ENCODE measurements at regions of chr12 and their contacts with region 1.

Region 1: DNA sequence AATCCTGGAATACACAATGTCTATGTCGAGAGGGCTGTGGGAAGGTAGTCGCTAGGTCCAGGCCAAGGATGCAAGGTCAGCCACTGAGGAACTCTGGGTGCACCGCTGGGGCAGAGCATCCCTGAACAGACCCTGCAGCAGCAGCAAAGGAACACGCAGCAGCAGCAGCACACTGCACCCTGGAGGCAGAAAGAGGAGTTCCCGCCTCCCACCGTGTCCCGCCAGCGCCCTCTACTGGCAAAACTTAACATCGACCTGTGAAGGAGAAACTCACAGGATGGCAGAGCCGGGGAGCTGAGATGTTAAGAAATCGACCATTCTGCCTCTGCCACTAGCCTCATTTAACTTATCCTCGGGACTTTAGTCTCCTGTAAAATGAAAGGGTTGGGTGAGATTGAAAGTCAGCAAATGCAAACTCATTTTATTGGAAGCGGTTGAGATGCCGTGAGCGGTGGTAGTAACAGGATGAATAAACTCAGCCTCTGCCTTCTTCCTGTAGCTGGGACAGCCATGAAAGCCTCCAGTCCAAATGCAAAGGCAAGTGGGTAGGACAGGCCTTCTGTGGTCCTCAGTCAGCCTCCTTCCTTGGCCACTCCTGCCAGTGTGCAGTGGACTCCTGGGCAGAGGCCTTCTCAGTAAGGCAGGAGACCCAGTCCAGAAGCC is 45.6 kb downstream of the STAB2 start:
- DNase-seq: peak; percentile 64
- H3K4me3 ChIP-seq: no peak overlapping the region
- H3K27ac ChIP-seq: no peak overlapping the region
- H3K4me1 ChIP-seq: peaks cover 3% of the 10 kb centered on the region
- H3K27me3 ChIP-seq: no peaks in the 10 kb centered on the region
- CTCF ChIP-seq: peak; percentile 98 to 100
- POLR2A ChIP-seq: no peak

Region 2: DNA sequence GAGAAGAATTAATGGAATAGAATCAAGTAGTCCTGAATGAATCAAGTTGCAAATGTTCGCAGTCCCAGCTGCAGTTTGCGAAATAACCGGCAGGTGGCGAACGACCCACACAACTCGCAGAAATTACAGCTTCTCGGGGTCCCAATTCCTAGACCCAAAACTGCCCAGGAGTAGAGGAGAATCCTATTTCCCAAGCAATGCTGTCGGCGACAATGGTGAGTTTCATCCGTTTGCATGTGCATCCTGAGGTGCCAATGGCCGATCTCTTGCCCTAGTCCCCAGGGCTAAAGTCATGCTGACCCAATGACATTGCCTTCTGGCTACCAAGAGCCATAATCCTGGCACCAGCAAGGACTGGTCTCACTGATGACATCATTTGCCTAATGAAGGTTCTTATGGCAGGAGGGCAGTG is 683.7 kb before region 1 on chr12:
- CTCF ChIA-PET with region 1: interaction called, 18 read pairs
- POLR2A ChIA-PET with region 1: no interaction called
- dilution Hi-C with region 1: no loop called
- intact Hi-C with region 1: loop called (anchors 2 kb)
- DNase-seq: peak; percentile 49
- H3K4me3 ChIP-seq: no peak overlapping the region
- H3K27ac ChIP-seq: no peak overlapping the region
- H3K4me1 ChIP-seq: no peaks in the 10 kb centered on the region
- H3K27me3 ChIP-seq: peaks cover 15 to 19% of the 10 kb centered on the region in 2 experiments
- CTCF ChIP-seq: peak; percentile 70 to 80
- POLR2A ChIP-seq: no peak

Region 3: GRCh38 chr12:103571286-103571685 is 61.4 kb before region 1 on chr12:
- CTCF ChIA-PET with region 1: interaction called, 107 read pairs
- POLR2A ChIA-PET with region 1: no interaction called
- dilution Hi-C with region 1: no loop called
- intact Hi-C with region 1: loop called (anchors 1 kb)
- DNase-seq: peak; percentile 13
- H3K4me3 ChIP-seq: no peak overlapping the region
- H3K27ac ChIP-seq: no peak overlapping the region
- H3K4me1 ChIP-seq: no peaks in the 10 kb centered on the region
- H3K27me3 ChIP-seq: peaks cover 7 to 13% of the 10 kb centered on the region in 2 experiments
- CTCF ChIP-seq: no peak
- POLR2A ChIP-seq: no peak

Region 4: GRCh38 chr12:103578926-103579325 is 53.8 kb before region 1 on chr12:
- CTCF ChIA-PET with region 1: interaction called, 107 read pairs
- POLR2A ChIA-PET with region 1: no interaction called
- dilution Hi-C with region 1: no loop called
- intact Hi-C with region 1: loop called (anchors 1 kb)
- DNase-seq: no peak
- H3K4me3 ChIP-seq: no peak overlapping the region
- H3K27ac ChIP-seq: no peak overlapping the region
- H3K4me1 ChIP-seq: no peaks in the 10 kb centered on the region
- H3K27me3 ChIP-seq: no peaks in the 10 kb centered on the region
- CTCF ChIP-seq: no peak
- POLR2A ChIP-seq: no peak

Region 5: GRCh38 chr12:103586132-103586531 is 46.6 kb before region 1 on chr12:
- CTCF ChIA-PET with region 1: interaction called, 18 read pairs
- POLR2A ChIA-PET with region 1: no interaction called
- dilution Hi-C with region 1: no loop called
- intact Hi-C with region 1: loop called (anchors 2 kb)
- DNase-seq: no peak
- H3K4me3 ChIP-seq: no peak overlapping the region
- H3K27ac ChIP-seq: no peak overlapping the region
- H3K4me1 ChIP-seq: no peaks in the 10 kb centered on the region
- H3K27me3 ChIP-seq: no peaks in the 10 kb centered on the region
- CTCF ChIP-seq: no peak
- POLR2A ChIP-seq: no peak

Region 6: DNA sequence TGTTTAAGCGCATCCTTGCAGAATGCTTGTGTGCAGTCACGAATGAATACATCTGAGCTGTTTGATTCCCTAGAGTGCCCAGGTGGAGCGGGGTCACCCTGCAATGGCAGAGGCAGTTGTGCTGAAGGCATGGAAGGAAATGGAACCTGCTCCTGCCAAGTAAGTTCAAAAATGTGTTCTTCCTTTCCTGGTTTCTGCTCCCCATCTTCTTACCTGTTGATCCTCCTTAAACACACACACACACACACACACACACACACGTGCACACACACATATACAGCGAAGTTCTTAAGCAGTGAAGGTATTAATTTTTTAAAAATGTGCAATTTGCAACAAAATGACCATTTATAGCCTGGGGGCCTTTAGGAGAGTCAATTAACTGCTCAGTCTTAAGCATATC is 12.3 kb before region 1 on chr12:
- CTCF ChIA-PET with region 1: interaction called, 14 read pairs
- POLR2A ChIA-PET with region 1: no interaction called
- dilution Hi-C with region 1: no loop called
- intact Hi-C with region 1: no loop called
- DNase-seq: no peak
- H3K4me3 ChIP-seq: no peak overlapping the region
- H3K27ac ChIP-seq: no peak overlapping the region
- H3K4me1 ChIP-seq: no peaks in the 10 kb centered on the region
- H3K27me3 ChIP-seq: no peaks in the 10 kb centered on the region
- CTCF ChIP-seq: no peak
- POLR2A ChIP-seq: no peak

Region 7: GRCh38 chr12:103664626-103665025 is 31.9 kb after region 1 on chr12:
- CTCF ChIA-PET with region 1: interaction called, 12 read pairs
- POLR2A ChIA-PET with region 1: no interaction called
- dilution Hi-C with region 1: no loop called
- intact Hi-C with region 1: no loop called
- DNase-seq: no peak
- H3K4me3 ChIP-seq: no peak overlapping the region
- H3K27ac ChIP-seq: no peak overlapping the region
- H3K4me1 ChIP-seq: no peaks in the 10 kb centered on the region
- H3K27me3 ChIP-seq: no peaks in the 10 kb centered on the region
- CTCF ChIP-seq: no peak
- POLR2A ChIP-seq: no peak

Region 8: GRCh38 chr12:103785236-103786031 is 152.7 kb after region 1 on chr12:
- CTCF ChIA-PET with region 1: no interaction called
- POLR2A ChIA-PET with region 1: no interaction called
- dilution Hi-C with region 1: no loop called
- intact Hi-C with region 1: no loop called
- DNase-seq: no peak
- H3K4me3 ChIP-seq: no peak overlapping the region
- H3K27ac ChIP-seq: no peak overlapping the region
- H3K4me1 ChIP-seq: no peaks in the 10 kb centered on the region
- H3K27me3 ChIP-seq: no peaks in the 10 kb centered on the region
- CTCF ChIP-seq: no peak
- POLR2A ChIP-seq: no peak

Region 9: DNA sequence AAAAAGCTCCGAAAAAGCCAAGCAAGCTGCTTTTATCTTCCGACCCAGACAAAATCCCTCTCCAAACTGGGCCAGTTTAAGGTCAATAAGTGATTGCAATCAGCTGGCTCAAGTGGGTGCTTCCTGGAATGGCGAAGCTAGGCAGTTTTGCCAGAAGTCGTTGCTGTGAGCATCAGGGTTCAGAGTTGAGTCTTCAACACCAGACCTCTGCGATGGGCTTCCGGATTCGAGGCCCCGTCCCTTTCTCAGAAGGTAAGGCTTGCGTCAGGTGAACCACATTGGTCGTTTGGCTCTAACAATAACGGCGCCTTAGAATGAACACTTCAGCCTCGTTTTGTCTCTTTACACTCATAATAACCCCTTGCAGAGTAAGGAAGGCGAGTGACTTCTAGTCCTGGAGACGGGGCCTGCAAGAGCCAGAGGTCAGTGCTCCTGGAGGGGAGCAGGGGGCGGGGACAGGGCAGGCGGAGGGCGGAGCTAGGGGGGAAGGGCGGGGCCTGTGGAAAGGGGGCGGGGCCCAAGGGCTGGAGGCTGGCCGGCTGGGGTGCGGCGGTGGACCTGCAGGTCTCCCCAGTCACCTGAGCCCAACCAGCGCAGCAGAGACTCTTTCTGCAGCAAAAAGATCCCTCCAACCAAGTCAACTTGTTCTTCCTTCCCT is 539.2 kb after region 1 on chr12:
- CTCF ChIA-PET with region 1: no interaction called
- POLR2A ChIA-PET with region 1: no interaction called
- dilution Hi-C with region 1: no loop called
- intact Hi-C with region 1: no loop called
- DNase-seq: no peak
- H3K4me3 ChIP-seq: no peak overlapping the region
- H3K27ac ChIP-seq: no peak overlapping the region
- H3K4me1 ChIP-seq: no peaks in the 10 kb centered on the region
- H3K27me3 ChIP-seq: no peaks in the 10 kb centered on the region
- CTCF ChIP-seq: no peak
- POLR2A ChIP-seq: no peak

Measured in endothelial cell of umbilical vein (primary cell).